ENCODE measurements at regions of chr6 and their contacts with region 1.

Region 1: GRCh38 chr6:27871924-27872638 is 40.1 kb downstream of the OR2B2 start:
- DNase-seq: peak; percentile 79
- ATAC-seq: peak; percentile 58
- H3K4me3 Mint-ChIP-seq: peak overlapping the region; percentile 94
- H3K27ac Mint-ChIP-seq: peak overlapping the region; percentile 99
- H3K4me1 Mint-ChIP-seq: peaks cover 50% of the 10 kb centered on the region
- H3K27me3 Mint-ChIP-seq: no peaks in the 10 kb centered on the region
- CTCF ChIP-seq: no peak

Region 2: GRCh38 chr6:27825025-27825793 is 46.9 kb before region 1 on chr6:
- CTCF ChIA-PET with region 1: interaction called, 4 read pairs
- POLR2A ChIA-PET with region 1: interaction called, 88 read pairs
- DNase-seq: no peak
- ATAC-seq: no peak
- H3K4me3 Mint-ChIP-seq: peak overlapping the region; percentile 86
- H3K27ac Mint-ChIP-seq: peak overlapping the region; percentile 99
- H3K4me1 Mint-ChIP-seq: peaks cover 27% of the 10 kb centered on the region
- H3K27me3 Mint-ChIP-seq: no peaks in the 10 kb centered on the region
- CTCF ChIP-seq: no peak

Region 3: DNA sequence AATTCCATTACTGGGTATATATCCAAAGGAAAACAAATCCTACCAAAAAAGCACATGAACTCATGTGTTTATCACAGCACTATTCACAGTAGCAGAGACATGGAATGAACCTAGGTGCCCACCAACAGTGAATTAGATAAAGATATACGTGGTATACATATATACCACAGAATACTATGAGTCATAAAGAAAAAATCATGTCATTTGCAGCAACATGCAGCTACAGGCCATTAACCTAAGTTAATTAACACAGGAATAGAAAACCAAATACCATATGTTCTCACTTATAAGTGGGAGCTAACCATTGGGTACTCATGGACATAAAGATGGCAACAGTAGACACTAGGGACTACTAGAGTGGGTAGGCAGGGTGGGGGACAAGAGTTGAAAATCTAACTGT is 35.9 kb after region 1 on chr6:
- CTCF ChIA-PET with region 1: no interaction called
- POLR2A ChIA-PET with region 1: no interaction called
- DNase-seq: no peak
- ATAC-seq: no peak
- H3K4me3 Mint-ChIP-seq: no peak overlapping the region
- H3K27ac Mint-ChIP-seq: no peak overlapping the region
- H3K4me1 Mint-ChIP-seq: 0 out of 2 replicates have a peak, but pooled peaks cover 3% of the 10 kb centered on the region
- H3K27me3 Mint-ChIP-seq: no peaks in the 10 kb centered on the region
- CTCF ChIP-seq: no peak